ENCODE measurements at regions of chr2 and their contacts with region 1.

Region 1: DNA sequence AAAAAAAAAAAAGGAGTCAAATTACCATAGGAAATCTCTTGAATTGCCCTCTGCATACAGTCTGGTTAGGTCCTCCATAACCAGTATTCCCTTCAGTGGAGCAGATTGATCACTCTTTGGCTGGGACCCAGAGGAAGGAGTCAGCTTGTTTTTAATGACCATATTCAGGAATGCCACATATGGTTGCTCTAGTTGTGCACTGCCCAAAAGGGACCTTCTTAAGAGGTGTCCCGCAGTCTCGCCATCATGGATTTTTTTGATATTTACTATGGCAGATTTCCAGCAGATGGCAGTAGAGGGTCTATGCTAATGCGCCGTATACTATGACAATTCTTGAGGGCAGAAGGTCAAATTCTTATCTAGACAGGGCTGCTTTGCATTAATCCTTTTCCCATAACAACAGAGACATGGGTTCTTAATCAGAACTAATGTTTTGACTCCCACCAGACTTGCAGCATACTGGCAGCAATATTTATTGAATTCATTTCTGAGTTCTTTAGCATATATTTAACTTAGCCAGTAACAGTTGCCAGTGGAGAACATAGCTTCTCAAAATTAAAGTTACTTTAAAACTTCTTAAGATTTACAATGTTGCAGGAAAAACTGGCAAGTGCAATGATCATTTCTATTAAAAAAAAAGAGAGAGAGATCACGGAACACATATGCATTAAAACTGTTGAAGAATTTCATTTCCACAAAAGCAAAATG is 31.8 kb upstream of the INPP4A start:
- DNase-seq: no peak
- ATAC-seq: peak; percentile 51 to 52
- H3K4me3 ChIP-seq: no peak overlapping the region
- H3K27ac ChIP-seq: no peak overlapping the region
- H3K4me1 ChIP-seq: no peaks in the 10 kb centered on the region
- H3K27me3 ChIP-seq: no peaks in the 10 kb centered on the region
- CTCF ChIP-seq: peak in 4 of 5 experiments; percentile 51 to 64 (median 60)
- POLR2A ChIP-seq: no peak

Region 2: DNA sequence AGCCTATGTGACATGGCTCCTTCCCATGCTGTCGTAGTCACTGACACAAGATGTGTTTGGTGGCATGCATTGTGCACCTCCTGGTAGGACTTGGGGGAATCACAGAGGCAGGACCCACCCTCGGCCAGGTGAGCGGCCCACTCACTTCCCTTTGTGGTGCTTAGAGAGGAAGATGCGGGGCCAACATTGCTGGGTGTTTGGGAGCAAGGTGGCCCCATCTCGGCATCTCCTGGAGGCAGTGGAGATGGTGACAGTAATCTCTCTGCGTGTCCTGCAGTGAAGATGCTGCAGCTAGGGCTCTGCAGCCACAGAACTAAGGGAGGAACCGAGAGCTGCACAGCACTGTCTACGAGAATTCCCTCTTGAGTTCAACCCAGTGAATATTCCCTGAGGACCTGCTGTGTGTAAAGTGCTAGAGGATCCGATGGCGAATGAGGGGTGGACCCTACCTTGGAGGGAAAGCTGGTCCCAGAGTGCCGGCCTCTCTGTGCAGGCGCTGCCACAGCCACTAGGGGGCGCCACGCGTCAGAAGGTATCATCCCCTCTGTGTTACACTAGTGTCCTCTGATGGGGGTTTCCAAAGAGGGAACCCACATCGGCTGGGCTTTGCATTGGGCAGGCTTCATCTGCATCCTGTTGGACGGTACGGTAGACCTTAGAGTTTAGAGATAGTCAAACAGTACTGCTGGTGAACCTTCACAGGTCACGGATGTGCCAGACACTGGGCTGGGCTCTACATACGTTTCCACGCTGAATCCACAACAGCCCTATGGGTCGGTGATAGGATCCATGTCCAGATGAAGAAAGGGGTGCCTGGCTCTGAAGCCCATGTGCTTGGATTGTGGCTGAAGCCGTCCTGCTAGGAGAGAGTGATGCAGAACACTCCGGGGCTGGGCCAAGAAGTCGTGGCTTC is 156.2 kb after region 1 on chr2:
- in situ Hi-C with region 1: loop called in 1 of 4 experiments (anchors 25 kb)
- intact Hi-C with region 1: loop called (anchors 10 kb)
- DNase-seq: no peak
- ATAC-seq: peak in 1 of 2 donors; percentile 39
- H3K4me3 ChIP-seq: no peak overlapping the region
- H3K27ac ChIP-seq: no peak overlapping the region
- H3K4me1 ChIP-seq: no peaks in the 10 kb centered on the region
- H3K27me3 ChIP-seq: no peaks in the 10 kb centered on the region
- CTCF ChIP-seq: peak; percentile 44 to 80 (median 67)
- POLR2A ChIP-seq: no peak

Region 3: DNA sequence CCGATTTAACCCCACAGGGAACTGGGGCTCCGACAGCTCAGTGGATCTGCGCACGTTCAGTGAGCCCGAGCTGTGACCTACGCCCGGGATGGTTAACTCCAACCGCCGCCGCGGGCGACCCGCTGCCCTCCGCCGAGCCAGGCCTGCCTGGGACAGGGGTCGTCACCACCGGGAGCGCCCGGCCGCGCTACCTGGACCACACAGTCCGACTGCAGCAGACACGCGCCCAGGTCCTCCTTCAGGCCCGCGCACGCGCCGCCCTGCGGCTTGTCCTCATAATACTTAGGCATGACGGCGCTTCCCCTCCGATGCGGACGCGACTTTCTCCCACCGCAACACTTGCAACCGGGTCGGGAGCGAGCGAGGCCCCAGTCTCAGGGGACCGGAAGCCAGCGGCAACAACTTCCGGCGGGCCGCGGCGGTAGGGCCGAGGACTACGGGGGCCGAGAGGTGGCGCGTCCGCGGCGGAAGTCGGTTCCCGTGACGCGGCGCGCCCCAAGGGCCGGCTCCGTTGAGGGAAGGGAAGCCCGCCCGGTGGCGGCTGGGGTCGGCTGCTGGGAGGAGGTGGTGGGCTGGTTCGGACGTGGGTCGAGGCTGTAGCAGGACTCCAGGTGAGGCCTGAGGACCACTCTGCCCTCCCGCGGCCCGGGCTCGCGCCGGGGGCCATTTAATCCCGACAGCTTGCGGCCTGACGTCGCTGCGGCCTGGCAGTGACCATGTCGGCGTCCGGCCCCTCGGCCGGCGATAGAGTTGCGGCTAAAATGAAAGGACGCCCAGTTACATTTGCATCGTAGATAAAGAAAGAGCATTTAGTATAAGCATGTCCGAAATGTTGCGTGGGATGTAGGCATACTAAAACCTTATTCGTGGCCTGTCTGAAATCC is 195.5 kb after region 1 on chr2 and contains the starts of genes COA5 and UNC50:
- in situ Hi-C with region 1: loop called in 1 of 4 experiments (anchors 10 kb)
- intact Hi-C with region 1: loop called (anchors 10 kb)
- DNase-seq: peak; percentile 79 to 85
- ATAC-seq: peak; percentile 90
- H3K4me3 ChIP-seq: peak within 1 kb of the TSS; percentile 70 to 90 (median 86)
- H3K27ac ChIP-seq: peak within 1 kb of the TSS; percentile 91 to 97 (median 94)
- H3K4me1 ChIP-seq: peaks cover 53 to 59% of the 10 kb centered on the region in 2 donors
- H3K27me3 ChIP-seq: no peaks in the 10 kb centered on the region
- CTCF ChIP-seq: no peak
- POLR2A ChIP-seq: peak; percentile 79 to 89
- total RNA-seq, gene COA5: 26.1 to 45.1 (median 31.0) TPM
- total RNA-seq, gene UNC50: 30.3 to 43.1 (median 30.5) TPM